ENCODE measurements at regions of chr9 and their contacts with region 1.

Region 1: GRCh38 chr9:114738581-114739316 is 56.8 kb upstream of the TEX48 start:
- DNase-seq: peak; percentile 68 to 78
- H3K4me3 ChIP-seq: no peak overlapping the region
- H3K4me3 Mint-ChIP-seq: no peak overlapping the region
- H3K27ac Mint-ChIP-seq: no peak overlapping the region
- H3K4me1 ChIP-seq: no peaks in the 10 kb centered on the region
- H3K4me1 Mint-ChIP-seq: no peaks in the 10 kb centered on the region
- H3K27me3 ChIP-seq: no peaks in the 10 kb centered on the region
- H3K27me3 Mint-ChIP-seq: no peaks in the 10 kb centered on the region
- CTCF ChIP-seq: peak; percentile 75 to 83

Region 2: GRCh38 chr9:114662081-114662989 is 76.4 kb before region 1 on chr9:
- CTCF ChIA-PET with region 1: no interaction called
- POLR2A ChIA-PET with region 1: no interaction called
- intact Hi-C with region 1: loop called (anchors 5 kb)
- DNase-seq: peak; percentile 60 to 71
- H3K4me3 ChIP-seq: no peak overlapping the region
- H3K4me3 Mint-ChIP-seq: no peak overlapping the region
- H3K27ac Mint-ChIP-seq: no peak overlapping the region
- H3K4me1 ChIP-seq: no peaks in the 10 kb centered on the region
- H3K4me1 Mint-ChIP-seq: no peaks in the 10 kb centered on the region
- H3K27me3 ChIP-seq: no peaks in the 10 kb centered on the region; the same call in 1 of the 2 replicates
- H3K27me3 Mint-ChIP-seq: peaks cover 11% of the 10 kb centered on the region
- CTCF ChIP-seq: peak; percentile 83

Region 3: DNA sequence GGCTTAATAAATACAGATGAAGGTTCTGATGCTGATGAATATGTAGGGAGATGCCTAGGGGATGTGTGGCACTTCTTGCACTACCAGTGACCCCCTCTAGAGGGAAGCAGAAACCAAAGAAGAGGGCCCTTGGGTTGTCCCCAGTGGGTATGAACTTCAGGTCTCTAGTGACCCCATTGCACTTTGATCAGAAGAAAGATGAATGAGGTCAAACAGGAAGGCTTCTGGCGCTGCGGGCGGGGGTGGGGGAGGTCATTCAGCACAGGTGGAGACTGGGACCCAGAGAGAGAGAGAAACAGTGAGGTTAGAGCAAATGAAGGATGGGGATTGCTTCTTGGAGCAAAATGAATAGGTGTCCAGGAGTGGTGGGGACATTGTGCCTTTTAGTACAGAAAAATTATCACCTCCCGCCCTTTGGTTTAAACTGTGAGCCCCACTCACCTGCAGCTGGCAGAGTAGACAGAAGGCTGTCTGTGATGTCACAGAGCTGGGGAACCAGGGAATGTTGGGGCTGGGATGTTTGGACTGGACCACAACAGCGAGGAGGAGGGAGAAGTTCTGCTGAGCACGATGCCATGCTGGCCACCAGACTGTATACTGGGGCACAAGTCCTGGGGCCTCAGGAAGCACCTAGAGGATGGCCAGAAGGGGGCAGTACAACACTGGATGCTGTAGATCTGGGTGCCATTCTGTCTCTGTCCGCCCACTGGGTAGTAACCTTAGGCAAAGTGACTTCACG is 57.0 kb before region 1 on chr9 and contains the start of gene TEX48:
- CTCF ChIA-PET with region 1: no interaction called
- POLR2A ChIA-PET with region 1: no interaction called
- intact Hi-C with region 1: loop called (anchors 1 kb)
- DNase-seq: peak; percentile 73 to 83
- H3K4me3 ChIP-seq: no peak within 1 kb of the TSS
- H3K4me3 Mint-ChIP-seq: no peak within 1 kb of the TSS
- H3K27ac Mint-ChIP-seq: no peak within 1 kb of the TSS
- H3K4me1 ChIP-seq: no peaks in the 10 kb centered on the region; the same call in 1 of the 2 replicates
- H3K4me1 Mint-ChIP-seq: peaks cover 16% of the 10 kb centered on the region
- H3K27me3 ChIP-seq: no peaks in the 10 kb centered on the region
- H3K27me3 Mint-ChIP-seq: no peaks in the 10 kb centered on the region
- CTCF ChIP-seq: peak; percentile 80 to 86
- total RNA-seq, gene TEX48: not detected in 2 replicates

Region 4: DNA sequence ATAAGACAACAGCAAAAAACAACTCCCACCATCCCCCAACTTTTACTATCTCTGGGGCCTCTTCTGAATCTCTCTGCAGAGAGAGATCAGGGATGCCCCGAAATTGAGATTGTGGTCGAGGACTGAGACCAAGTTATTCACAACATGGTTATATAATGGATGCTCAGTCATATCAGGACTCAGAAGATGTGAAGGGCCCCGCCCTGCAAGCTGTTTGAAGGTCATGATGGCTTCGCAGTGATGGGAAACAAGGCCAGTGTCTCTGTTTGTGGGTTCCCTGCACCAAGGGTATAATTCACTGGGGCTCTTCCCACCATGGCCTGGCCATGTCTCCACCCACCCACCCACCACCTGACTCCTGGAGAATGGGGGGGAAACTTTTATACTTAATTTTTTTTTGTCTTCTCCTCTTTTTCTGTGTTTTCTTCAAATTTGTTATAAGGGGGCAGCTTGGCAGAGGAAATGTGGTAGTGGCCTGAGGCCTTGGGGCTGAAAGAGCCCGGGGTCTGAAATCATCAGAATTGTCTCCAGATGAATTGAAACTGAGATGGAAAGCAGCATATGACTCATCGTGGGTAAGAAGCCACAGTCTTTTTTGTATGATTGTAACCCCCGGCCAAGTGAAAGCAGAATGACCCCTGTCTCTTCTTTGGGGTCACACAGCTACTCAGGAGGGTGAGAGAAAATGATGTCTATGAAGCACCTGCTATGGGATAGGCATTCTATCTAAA is 41.8 kb before region 1 on chr9:
- CTCF ChIA-PET with region 1: no interaction called
- POLR2A ChIA-PET with region 1: no interaction called
- intact Hi-C with region 1: no loop called
- DNase-seq: no peak
- H3K4me3 ChIP-seq: no peak overlapping the region
- H3K4me3 Mint-ChIP-seq: no peak overlapping the region
- H3K27ac Mint-ChIP-seq: no peak overlapping the region
- H3K4me1 ChIP-seq: no peaks in the 10 kb centered on the region
- H3K4me1 Mint-ChIP-seq: no peaks in the 10 kb centered on the region
- H3K27me3 ChIP-seq: no peaks in the 10 kb centered on the region
- H3K27me3 Mint-ChIP-seq: no peaks in the 10 kb centered on the region
- CTCF ChIP-seq: no peak

Region 5: GRCh38 chr9:114805670-114806525 is 67.1 kb after region 1 on chr9 and contains the start of gene TNFSF15:
- CTCF ChIA-PET with region 1: no interaction called
- POLR2A ChIA-PET with region 1: no interaction called
- intact Hi-C with region 1: loop called (anchors 1 kb)
- DNase-seq: peak; percentile 63 to 80
- H3K4me3 ChIP-seq: no peak within 1 kb of the TSS
- H3K4me3 Mint-ChIP-seq: peak within 1 kb of the TSS; percentile 56
- H3K27ac Mint-ChIP-seq: peak within 1 kb of the TSS; percentile 25
- H3K4me1 ChIP-seq: peaks cover 40% of the 10 kb centered on the region
- H3K4me1 Mint-ChIP-seq: peaks cover 29% of the 10 kb centered on the region
- H3K27me3 ChIP-seq: no peaks in the 10 kb centered on the region
- H3K27me3 Mint-ChIP-seq: peaks cover 6% of the 10 kb centered on the region
- CTCF ChIP-seq: no peak
- total RNA-seq, gene TNFSF15: 0.66 and 1.00 TPM in 2 replicates

Measured in Caco-2 (cell line).